ENCODE measurements at regions of chr3 and their contacts with region 1.

Region 1: GRCh38 chr3:168061332-168061996 is 34.3 kb downstream of the GOLIM4 start:
- DNase-seq: peak; percentile 34
- ATAC-seq: peak; percentile 83
- H3K4me3 Mint-ChIP-seq: peak overlapping the region; percentile 27
- H3K27ac Mint-ChIP-seq: peak overlapping the region; percentile 20
- H3K4me1 Mint-ChIP-seq: peaks cover 26% of the 10 kb centered on the region
- H3K27me3 Mint-ChIP-seq: no peaks in the 10 kb centered on the region

Region 2: DNA sequence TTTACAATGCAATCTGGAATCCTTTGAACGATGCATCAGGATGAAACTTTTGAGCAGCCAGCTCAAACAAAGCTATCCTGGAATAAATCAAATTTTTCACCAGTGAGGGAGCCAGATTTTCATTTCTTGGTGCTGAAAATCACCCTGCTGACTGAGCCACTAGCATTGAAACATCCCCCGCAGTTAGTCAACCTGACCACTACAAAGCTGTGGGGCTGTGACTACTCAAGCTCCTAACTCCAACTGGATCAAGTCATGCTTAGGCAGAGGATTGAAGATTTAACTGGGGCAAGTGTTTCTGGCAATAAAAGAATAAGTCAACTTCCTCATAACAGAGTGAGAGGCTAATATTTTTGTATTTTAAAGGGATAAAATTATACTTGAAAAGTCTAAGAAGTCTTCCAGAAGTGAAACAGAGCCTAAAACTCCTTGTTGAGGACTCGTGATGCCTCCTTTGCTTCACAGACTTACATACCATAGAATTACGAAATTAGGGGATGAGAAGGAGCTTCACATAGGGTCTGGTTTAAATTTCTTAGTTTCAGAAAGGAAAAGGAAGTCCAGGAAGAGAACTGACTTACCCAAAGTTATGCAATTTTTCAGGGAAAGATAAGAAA is 148.1 kb before region 1 on chr3:
- CTCF ChIA-PET with region 1: no interaction called
- POLR2A ChIA-PET with region 1: no interaction called
- DNase-seq: no peak
- ATAC-seq: no peak
- H3K4me3 Mint-ChIP-seq: no peak overlapping the region
- H3K27ac Mint-ChIP-seq: no peak overlapping the region
- H3K4me1 Mint-ChIP-seq: no peaks in the 10 kb centered on the region
- H3K27me3 Mint-ChIP-seq: peaks cover 3% of the 10 kb centered on the region

Region 3: DNA sequence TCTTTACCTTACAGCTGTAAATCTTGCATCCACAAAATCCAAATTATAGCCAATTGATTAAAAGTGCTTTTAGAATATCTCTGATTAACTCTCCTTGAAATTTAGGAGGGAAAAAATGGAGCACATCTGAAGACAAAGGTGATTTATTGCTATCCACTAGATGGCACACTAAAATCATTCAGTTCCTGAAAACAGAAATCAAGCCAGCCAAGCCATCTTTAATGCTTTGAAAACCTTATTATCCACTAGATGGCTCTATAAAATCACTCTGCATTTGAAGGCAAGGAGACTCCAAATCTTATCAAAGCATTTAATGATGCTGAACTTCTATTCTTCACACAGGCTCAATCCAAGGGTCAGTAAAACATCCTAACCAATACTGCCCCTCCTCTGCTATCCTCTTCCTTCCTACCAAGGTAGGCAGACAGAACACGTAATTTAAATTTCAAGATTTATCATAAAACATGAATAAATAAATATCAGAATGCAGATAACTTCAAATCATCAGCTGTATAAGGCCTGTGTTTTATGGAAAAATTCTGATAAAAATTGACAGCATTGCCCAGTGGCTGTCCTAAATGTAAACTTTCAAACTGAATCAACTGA is 14.2 kb before region 1 on chr3:
- CTCF ChIA-PET with region 1: interaction called, 24 read pairs
- POLR2A ChIA-PET with region 1: no interaction called
- DNase-seq: peak; percentile 39
- ATAC-seq: peak; percentile 87
- H3K4me3 Mint-ChIP-seq: no peak overlapping the region
- H3K27ac Mint-ChIP-seq: no peak overlapping the region
- H3K4me1 Mint-ChIP-seq: no peaks in the 10 kb centered on the region
- H3K27me3 Mint-ChIP-seq: peaks cover 4% of the 10 kb centered on the region

Region 4: GRCh38 chr3:168088106-168088720 is 26.7 kb after region 1 on chr3:
- CTCF ChIA-PET with region 1: interaction called, 10 read pairs
- POLR2A ChIA-PET with region 1: no interaction called
- DNase-seq: peak; percentile 42
- ATAC-seq: peak; percentile 66
- H3K4me3 Mint-ChIP-seq: no peak overlapping the region
- H3K27ac Mint-ChIP-seq: no peak overlapping the region
- H3K4me1 Mint-ChIP-seq: peaks cover 39% of the 10 kb centered on the region
- H3K27me3 Mint-ChIP-seq: peaks cover 16% of the 10 kb centered on the region

Region 5: DNA sequence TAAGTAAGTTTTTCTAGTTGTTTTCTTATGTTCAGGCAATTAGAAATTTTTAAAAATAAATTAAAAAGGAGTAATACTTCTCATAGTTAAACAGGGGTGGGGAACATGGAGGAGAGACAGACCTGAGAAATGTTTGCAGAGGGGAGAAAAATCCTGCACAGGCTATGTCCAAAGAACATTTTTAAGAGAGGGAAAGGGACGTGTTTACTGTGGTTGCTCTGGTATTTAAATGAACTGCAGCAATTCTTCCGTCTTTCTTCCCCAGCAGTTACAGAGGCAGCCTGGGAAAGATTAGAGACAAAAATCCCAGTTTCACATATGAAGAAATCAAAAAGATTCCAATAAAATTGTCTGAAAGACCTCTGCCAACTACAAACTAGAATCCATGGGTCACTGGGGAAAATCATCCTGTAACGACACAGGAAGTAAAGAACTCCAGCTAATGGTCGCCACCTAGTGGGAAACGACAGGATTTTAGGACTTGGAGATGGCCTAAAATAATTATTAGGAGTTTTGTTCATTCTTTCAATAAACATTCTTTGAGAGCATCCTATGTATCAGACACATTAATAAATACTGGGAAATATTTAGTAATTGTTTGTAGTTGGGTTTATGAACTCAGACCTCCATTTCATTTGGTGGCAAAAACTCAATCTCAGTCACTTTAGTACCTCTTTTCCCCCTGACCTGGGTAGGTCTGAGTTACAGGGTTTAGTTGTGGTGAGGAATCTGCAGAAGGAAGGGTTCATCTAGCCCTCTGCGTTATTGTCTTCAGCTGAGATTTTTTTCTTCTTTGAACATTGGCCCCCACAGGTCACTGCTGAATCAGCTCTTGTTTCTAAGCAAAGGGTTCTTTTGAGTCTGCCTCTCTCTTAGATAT is 104.2 kb after region 1 on chr3:
- CTCF ChIA-PET with region 1: interaction called, 18 read pairs
- POLR2A ChIA-PET with region 1: no interaction called
- DNase-seq: peak; percentile 59
- ATAC-seq: peak; percentile 70
- H3K4me3 Mint-ChIP-seq: no peak overlapping the region
- H3K27ac Mint-ChIP-seq: no peak overlapping the region
- H3K4me1 Mint-ChIP-seq: peaks cover 3% of the 10 kb centered on the region
- H3K27me3 Mint-ChIP-seq: peaks cover 3% of the 10 kb centered on the region

Measured in activated CD8-positive, alpha-beta T cell treated with anti-CD3 and anti-CD28 coated beads, Interleukin-2, amount 10 ng/mL, durations not matched to agents 7 days and 5 days (primary cell).